AG04449 (cell line): ENCODE measurements at regions of chr21 and their contacts with region 1.

Region 1: DNA sequence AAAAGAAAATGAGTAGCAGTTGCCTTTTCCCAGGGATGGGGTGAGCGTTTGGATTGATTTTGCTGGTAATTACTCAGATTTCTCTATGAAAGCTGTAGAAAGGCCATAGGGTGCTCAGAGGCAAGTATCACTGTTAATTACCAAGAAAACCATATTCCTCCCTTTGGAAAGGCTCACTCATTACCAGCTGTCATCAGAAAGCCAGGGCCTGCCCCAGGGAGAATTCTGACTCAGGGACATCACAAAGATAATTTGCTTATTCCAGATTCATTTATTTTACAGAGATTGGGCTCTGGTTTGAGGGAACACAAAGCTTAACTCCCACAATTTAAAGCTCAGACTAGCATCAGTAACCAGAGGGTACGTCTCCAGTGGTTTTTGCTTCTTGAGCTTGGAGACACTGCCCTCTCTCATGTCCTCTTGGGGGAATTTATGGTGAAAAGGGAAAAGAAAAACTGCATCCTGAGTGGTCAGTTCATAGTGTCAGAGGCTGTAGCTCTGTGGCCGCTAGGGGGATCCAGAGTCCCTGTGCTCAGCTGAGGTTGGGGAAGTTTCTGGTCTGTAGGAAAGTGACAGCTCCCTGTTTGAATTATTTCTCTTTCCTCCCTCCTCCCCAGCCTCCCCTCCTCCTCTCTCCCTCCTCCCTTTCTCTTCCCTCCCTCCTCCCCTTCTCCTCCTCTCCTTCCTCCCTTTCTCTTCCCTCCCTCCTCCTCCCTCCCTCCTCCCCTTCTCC is 204.3 kb downstream of the KCNJ6 start:
- DNase-seq: no peak
- H3K4me3 ChIP-seq: no peak overlapping the region
- CTCF ChIP-seq: peak; percentile 90

Region 2: GRCh38 chr21:37675202-37675801 is 36.7 kb before region 1 on chr21:
- CTCF ChIA-PET with region 1: interaction called, 21 read pairs
- POLR2A ChIA-PET with region 1: no interaction called
- DNase-seq: no peak
- H3K4me3 ChIP-seq: no peak overlapping the region
- CTCF ChIP-seq: peak; percentile 89

Region 3: DNA sequence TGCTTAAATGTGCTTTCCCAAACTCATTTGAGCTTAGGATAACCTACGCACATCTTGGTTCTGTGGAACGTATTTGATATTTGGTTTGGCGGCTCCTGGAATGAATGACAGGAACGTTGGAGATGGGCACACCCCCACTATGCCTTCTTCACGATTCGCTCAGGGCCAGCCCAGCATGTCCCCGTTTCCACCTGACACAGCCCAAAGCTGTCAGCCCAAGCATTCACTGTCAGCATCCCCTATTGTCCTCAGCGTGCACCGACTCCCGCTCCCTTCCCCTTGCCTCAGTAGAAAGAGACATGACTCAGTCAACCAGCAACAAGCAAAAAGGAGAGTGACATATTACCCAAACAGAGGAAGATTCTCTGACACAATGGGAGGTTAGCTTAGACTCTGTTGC is 22.8 kb after region 1 on chr21:
- CTCF ChIA-PET with region 1: interaction called, 15 read pairs
- POLR2A ChIA-PET with region 1: no interaction called
- DNase-seq: no peak
- H3K4me3 ChIP-seq: no peak overlapping the region
- CTCF ChIP-seq: no peak

Region 4: DNA sequence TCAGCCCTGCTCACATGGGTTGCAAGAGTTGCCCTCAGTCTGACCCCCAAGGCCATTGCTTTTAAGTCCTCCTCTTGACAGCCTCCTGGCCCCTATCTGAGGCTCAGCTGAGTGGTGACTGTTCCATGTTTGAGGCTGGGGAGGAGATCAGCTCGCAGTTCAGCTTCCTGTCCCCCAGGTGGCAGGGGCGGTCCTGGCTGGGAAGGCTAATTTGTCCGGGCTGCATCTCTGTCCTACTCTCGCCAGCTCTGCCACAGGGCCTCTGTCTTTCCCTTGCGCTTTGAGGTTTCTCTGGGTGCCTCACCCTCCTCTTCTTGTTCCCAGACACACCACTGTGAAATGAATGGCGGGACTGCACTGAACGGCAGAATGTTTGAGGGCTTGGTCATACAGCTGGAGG is 47.0 kb after region 1 on chr21:
- CTCF ChIA-PET with region 1: interaction called, 10 read pairs
- POLR2A ChIA-PET with region 1: no interaction called
- DNase-seq: no peak
- H3K4me3 ChIP-seq: no peak overlapping the region
- CTCF ChIP-seq: peak; percentile 94

Region 5: DNA sequence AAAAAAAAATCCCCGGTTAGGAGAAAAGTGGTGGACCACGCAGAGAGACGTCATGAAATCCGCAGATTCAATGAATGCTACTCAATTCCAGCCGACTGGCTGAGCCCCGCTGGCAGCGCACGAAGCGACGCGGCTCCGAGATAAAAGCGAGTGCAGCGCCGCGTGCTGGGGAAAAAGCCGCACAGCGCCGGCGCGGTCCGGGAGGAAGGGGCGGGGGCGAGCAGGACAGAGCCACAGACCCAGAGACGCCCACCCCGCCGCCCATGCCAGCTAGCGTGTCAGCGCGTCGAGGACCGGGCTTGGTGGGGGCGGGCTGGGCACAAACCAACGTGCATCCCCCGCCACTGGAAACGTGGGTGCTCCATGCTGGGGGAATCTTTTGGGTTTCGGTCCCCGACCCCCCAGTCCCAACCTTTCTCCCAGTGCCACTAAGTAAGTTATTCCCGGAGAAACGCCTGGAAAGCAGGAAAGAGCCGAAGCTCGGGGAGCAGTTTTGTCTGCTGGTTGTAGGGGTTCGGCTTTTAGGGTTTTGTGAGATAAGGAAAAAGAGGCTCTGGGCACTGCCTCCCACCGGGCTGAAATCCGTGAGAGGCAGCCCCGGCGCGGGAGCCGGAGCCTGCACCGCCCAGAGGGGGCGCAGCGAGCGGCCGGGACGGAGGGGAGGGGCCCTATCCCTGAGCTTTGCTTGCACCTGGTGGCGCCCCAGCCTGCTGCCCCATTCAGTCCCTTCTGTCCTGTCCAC is 204.5 kb after region 1 on chr21 and contains the start of gene KCNJ6:
- CTCF ChIA-PET with region 1: interaction called, 33 read pairs
- POLR2A ChIA-PET with region 1: no interaction called
- DNase-seq: no peak
- H3K4me3 ChIP-seq: peak within 1 kb of the TSS; percentile 32
- CTCF ChIP-seq: peak; percentile 89

Region 6: GRCh38 chr21:38159355-38159754 is 447.4 kb after region 1 on chr21:
- CTCF ChIA-PET with region 1: interaction called, 10 read pairs
- POLR2A ChIA-PET with region 1: no interaction called
- DNase-seq: peak; percentile 49
- H3K4me3 ChIP-seq: no peak overlapping the region
- CTCF ChIP-seq: peak; percentile 82